Breast epithelium (tissue), 4 donors: ENCODE measurements at regions of chr3 and their contacts with region 1.

Region 1: DNA sequence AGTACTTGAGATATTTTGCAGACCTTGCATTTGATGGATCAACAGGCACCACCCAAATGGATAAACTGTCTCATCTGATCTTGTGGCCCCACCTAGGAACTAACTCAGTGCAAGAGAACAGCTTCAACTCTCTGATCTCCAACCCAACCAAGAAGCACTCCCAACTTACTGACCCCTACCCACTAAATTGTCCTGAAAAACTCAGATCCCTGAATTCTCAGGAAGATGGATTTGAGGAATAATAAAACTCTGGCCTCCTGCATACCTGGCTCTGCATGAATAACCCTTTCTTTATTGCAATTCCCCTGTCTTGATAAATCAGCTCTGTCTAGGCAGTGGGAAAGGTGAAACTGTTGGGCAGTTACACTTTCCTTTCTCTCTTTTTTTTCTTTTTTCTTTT is 247.9 kb downstream of the ZPLD1 start:
- DNase-seq: no peak
- H3K4me3 ChIP-seq: no peak overlapping the region
- H3K27ac ChIP-seq: no peak overlapping the region
- H3K4me1 ChIP-seq: no peaks in the 10 kb centered on the region
- H3K27me3 ChIP-seq: no peaks in the 10 kb centered on the region
- CTCF ChIP-seq: no peak
- POLR2A ChIP-seq: no peak

Region 2: DNA sequence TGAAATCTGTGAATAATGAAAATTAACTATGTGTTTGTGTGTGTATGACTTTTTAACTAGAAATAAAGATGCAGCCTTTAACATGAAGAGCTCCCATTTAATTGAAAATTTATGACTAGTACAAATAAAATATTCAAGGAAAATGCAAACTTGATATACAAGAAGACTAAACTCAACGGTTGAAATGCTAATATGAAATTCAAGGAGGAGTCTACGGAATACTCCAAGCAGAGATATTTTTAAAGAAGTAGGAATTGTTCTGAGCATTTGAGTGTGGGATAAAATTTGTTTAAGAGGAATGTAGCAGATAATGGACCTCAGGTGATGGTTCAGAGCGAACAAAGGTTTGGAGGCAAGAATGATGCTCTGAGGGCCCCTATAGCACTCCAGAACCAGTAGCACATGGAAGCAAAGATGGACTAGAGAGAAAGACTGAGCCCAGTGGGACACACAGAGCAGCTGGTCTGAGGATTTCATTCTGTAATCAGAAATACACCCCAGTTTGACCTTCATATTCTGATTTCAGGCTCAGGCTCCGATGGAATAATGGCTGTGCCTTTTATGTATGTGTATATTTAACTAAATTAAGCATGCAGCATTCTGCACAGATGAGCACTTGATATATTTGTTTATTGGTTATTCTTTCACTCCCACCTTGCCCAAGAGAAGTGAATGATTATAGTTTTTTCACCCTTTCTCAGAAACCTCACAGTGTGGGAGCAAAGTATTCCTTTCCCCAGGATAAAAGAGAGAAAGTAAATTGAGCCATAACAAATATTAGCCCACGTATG is 20.8 kb before region 1 on chr3:
- intact Hi-C with region 1: loop called (anchors 1 kb)
- DNase-seq: no peak
- H3K4me3 ChIP-seq: no peak overlapping the region
- H3K27ac ChIP-seq: no peak overlapping the region
- H3K4me1 ChIP-seq: no peaks in the 10 kb centered on the region
- H3K27me3 ChIP-seq: no peaks in the 10 kb centered on the region
- CTCF ChIP-seq: no peak
- POLR2A ChIP-seq: no peak